ENCODE measurements at regions of chr14 and their contacts with region 1.

Region 1: DNA sequence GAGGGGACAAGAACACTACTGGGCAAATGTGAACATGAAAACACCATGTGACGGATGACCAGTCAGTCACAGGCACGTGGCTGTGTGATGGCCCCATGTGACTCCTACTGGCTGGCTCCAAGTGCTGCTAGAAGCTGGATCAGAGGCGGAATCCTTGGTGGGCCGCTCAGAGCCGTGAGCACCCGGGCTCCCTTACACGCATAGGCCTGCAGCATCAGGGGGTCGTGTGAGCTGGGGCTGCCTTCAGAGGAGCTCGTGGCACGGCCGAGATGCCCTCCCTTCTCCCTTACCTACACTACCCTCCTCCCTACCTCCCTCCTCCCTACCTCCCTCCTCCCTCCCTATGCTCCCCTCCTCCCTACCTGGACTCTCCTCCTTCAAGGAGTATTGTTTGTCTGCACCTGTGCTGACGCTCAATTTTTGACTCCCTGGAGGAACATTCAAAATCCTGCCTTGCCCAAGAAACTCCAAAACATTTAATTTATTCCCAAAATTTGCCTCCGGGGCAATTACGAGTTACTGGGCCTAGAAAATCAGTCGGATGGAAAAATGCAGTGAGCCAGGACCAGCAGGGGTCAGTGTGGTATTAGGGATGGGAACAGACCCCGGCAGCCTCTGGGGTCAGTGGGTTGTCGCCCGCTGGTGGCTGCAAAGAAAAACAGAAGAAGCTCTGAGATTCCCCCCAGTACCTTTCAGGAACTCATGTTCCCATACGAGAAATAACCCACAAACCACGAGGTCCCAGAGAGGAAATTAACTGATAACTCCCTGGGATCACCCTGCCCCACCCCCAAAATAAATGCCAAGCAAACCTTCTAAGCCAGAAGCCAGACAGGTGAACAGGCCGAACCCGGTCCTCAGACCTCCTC is 61.2 kb downstream of the C14orf132 start:
- DNase-seq: peak; percentile 83
- H3K4me3 ChIP-seq: no peak overlapping the region
- H3K27ac ChIP-seq: no peak overlapping the region
- H3K4me1 ChIP-seq: no peaks in the 10 kb centered on the region
- H3K27me3 ChIP-seq: no peaks in the 10 kb centered on the region
- CTCF ChIP-seq: peak; percentile 74 to 88 (median 82)
- POLR2A ChIP-seq: no peak

Region 2: DNA sequence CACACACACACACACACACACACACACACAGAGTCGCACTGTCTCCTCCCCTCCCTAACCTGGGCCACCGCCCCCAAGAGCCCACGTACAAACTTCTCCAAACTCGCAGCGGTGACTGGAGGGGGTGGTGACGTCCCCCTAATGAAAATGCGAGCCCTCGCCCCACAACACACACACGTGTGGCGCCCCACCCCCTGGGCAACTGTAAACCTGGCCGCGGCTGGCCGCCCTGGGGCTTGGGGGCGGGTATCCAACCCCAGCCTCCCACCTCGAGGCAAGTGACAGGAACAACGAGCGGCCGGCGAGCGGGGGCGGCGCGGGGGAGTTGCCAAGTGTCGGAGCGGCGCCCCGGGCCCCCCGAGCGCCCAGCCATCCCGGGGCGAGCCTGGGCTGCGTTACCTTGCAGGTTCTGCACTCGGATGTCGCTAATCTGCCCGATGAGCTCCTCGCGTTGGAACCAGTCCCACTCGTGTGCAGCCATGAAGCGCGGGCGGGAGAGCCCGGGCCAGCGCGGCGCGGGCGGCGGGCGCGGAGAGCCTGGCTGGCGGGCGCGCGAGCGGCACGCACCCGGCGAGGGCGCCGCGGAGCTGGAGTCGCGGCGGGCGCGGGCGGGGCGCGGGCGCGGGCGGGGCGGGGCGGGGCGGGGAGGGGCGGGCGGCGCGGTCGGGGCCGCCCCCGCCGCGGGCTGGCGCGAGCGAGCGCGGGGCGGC is 780.9 kb before region 1 on chr14 and contains the start of gene CLMN:
- intact Hi-C with region 1: no loop called
- DNase-seq: peak; percentile 39
- H3K4me3 ChIP-seq: peak within 1 kb of the TSS; percentile 72 to 90
- H3K27ac ChIP-seq: peak within 1 kb of the TSS; percentile 71 to 77
- H3K4me1 ChIP-seq: peaks cover 6% of the 10 kb centered on the region
- H3K27me3 ChIP-seq: no peaks in the 10 kb centered on the region
- CTCF ChIP-seq: no peak
- POLR2A ChIP-seq: no peak
- total RNA-seq, gene CLMN: 35.9 to 68.0 TPM

Region 3: GRCh38 chr14:96274543-96274942 is 174.1 kb after region 1 on chr14:
- intact Hi-C with region 1: loop called (anchors 5 kb)
- DNase-seq: no peak
- H3K4me3 ChIP-seq: no peak overlapping the region
- H3K27ac ChIP-seq: no peak overlapping the region
- H3K4me1 ChIP-seq: peaks cover 6% of the 10 kb centered on the region
- H3K27me3 ChIP-seq: no peaks in the 10 kb centered on the region
- CTCF ChIP-seq: no peak
- POLR2A ChIP-seq: no peak